ENCODE measurements at regions of chr1 and their contacts with region 1.

Region 1: GRCh38 chr1:211415700-211416099 is 76.3 kb downstream of the RD3 start:
- DNase-seq: no peak
- H3K4me3 ChIP-seq: peak overlapping the region; percentile 41
- H3K27ac ChIP-seq: no peak overlapping the region
- H3K4me1 ChIP-seq: no peaks in the 10 kb centered on the region
- H3K27me3 ChIP-seq: peaks cover 9% of the 10 kb centered on the region
- CTCF ChIP-seq: no peak

Region 2: GRCh38 chr1:211382714-211383480 is 32.8 kb before region 1 on chr1:
- CTCF ChIA-PET with region 1: no interaction called
- POLR2A ChIA-PET with region 1: interaction called, 16 read pairs
- intact Hi-C with region 1: no loop called
- DNase-seq: peak; percentile 94
- H3K4me3 ChIP-seq: peak overlapping the region; percentile 64
- H3K27ac ChIP-seq: peak overlapping the region; percentile 86
- H3K4me1 ChIP-seq: peaks cover 5% of the 10 kb centered on the region
- H3K27me3 ChIP-seq: no peaks in the 10 kb centered on the region
- CTCF ChIP-seq: no peak

Region 3: DNA sequence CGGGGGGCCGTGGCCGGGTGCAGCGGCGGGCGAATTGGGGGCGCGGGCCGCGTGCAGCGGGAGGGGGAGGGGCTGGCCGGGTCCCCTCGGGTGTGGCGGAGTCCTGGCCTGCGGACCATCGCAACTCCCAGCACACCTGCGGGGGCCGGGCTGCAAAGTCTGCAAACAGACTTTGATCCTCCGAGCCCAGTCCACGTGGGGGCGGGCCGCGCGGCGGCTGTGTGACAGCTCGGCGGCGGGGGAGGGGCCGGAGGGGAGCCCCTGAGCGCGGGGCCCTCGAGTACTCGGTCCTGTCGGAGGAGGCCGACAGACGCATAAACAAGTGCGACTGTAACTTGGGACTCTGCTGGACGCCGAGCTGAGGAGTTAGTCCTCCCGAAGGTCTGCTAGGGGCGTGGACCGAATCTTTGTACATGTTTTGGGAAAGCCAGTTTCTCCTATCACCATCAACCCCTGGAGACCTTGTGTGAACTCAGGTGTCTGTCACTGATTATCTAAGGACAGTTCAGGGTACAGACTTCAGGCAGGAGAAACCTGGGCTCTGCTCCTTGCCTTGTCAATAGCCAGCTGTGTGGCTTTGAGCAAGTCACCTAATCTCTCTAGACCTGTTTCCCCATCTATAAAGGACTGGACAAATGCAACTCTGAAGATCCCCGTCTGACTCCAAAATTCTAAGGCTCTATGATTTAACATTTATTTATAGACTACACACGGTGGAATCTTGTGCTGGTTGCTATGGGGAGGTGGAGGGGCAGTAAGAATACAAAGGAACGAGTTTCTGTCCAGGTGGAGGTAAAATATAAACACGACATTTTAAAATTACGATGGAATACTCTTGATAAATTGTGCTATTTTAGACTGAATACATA is 164.0 kb after region 1 on chr1:
- CTCF ChIA-PET with region 1: no interaction called
- POLR2A ChIA-PET with region 1: no interaction called
- intact Hi-C with region 1: no loop called
- DNase-seq: peak; percentile 72
- H3K4me3 ChIP-seq: peak overlapping the region; percentile 86
- H3K27ac ChIP-seq: peak overlapping the region; percentile 7
- H3K4me1 ChIP-seq: peaks cover 17% of the 10 kb centered on the region
- H3K27me3 ChIP-seq: no peaks in the 10 kb centered on the region
- CTCF ChIP-seq: no peak